OCI-LY7 (cell line): ENCODE measurements at regions of chr6 and their contacts with region 1.

Region 1: DNA sequence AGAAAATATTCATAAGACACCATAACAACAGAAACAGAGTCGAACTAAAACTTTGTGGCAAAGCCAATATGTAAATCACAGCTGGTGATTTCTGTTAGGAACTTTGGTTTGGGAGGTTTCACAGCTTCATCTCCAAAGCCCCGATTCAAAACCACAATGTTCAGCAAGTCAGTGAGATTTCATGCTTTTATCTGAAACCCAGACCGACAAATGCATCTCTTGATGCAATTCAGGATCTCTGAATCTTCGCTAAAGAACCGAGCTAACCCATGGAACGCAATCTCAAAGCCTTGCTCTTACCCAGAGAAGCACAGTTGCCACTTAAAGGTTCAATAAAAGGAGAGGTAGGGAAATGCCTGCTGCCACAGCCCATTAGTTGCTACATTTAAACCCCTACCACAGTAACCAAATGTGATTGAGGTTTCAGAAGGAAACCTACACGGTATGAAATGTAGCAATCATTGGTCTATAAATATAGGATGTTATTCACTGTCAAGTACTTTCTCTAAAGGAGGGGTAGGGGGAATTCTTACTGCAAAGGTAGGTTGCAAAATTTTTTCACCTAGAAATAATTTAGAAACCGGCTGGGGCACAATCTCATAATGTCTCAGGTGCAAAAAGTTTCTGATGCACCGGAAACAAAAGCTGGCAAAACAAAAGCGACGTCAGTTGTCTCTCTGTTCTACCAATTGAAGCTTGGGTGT is 381.0 kb upstream of the ARID1B start:
- DNase-seq: peak; percentile 89
- H3K4me3 ChIP-seq: peak overlapping the region; percentile 70
- H3K27ac ChIP-seq: peak overlapping the region; percentile 99
- H3K4me1 ChIP-seq: peaks cover 82% of the 10 kb centered on the region
- CTCF ChIP-seq: no peak

Region 2: DNA sequence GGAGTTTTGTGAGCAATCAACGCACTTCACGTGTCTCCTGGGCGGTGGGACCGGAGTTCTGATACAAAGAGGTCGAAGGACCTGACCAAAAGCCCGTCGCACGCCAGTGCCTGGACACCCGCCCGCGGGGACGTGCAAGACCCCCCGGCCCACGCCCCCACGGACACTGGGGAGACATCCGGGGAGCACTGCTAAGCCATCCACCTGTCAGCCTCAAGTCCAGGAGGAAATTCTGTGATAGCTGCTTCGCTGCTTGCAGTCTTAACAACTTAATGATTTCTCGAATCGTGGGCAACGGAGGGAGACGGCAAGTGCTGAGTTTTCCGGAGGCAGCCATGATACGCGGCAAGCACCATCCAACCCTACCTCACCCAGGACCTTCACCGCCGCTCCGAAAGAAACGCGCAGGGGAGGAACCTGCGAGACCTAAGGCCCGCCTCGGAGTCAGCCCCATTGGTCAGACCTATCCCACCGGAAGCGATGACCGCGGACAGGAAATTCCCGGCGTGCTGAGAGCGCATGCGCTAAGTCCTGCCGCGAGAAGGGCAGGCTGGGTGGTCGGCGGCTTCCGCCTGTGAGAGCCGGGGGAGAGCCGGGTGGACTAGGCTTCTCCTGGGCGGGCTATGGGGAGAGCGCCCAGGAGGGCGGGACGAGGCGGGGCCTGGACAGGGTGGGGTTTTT is 1082.0 kb before region 1 on chr6 and contains the start of gene TFB1M:
- CTCF ChIA-PET with region 1: no interaction called
- POLR2A ChIA-PET with region 1: interaction called, 5 read pairs
- intact Hi-C with region 1: loop called (anchors 2 kb)
- DNase-seq: peak; percentile 99
- H3K4me3 ChIP-seq: peak within 1 kb of the TSS; percentile 85
- H3K27ac ChIP-seq: peak within 1 kb of the TSS; percentile 89
- H3K4me1 ChIP-seq: peaks cover 28% of the 10 kb centered on the region
- CTCF ChIP-seq: no peak
- total RNA-seq, gene TFB1M: 33.0 and 34.8 TPM in 2 replicates

Region 3: GRCh38 chr6:156279261-156279969 is 116.8 kb before region 1 on chr6:
- CTCF ChIA-PET with region 1: interaction called, 5 read pairs
- POLR2A ChIA-PET with region 1: interaction called, 45 read pairs
- intact Hi-C with region 1: loop called (anchors 1 kb)
- DNase-seq: peak; percentile 98
- H3K4me3 ChIP-seq: peak overlapping the region; percentile 61
- H3K27ac ChIP-seq: peak overlapping the region; percentile 96
- H3K4me1 ChIP-seq: peaks cover 61% of the 10 kb centered on the region
- CTCF ChIP-seq: no peak

Region 4: GRCh38 chr6:156430386-156430785 is 34.2 kb after region 1 on chr6:
- CTCF ChIA-PET with region 1: no interaction called
- POLR2A ChIA-PET with region 1: no interaction called
- intact Hi-C with region 1: no loop called
- DNase-seq: no peak
- H3K4me3 ChIP-seq: no peak overlapping the region
- H3K27ac ChIP-seq: no peak overlapping the region
- H3K4me1 ChIP-seq: no peaks in the 10 kb centered on the region
- CTCF ChIP-seq: no peak

Region 5: DNA sequence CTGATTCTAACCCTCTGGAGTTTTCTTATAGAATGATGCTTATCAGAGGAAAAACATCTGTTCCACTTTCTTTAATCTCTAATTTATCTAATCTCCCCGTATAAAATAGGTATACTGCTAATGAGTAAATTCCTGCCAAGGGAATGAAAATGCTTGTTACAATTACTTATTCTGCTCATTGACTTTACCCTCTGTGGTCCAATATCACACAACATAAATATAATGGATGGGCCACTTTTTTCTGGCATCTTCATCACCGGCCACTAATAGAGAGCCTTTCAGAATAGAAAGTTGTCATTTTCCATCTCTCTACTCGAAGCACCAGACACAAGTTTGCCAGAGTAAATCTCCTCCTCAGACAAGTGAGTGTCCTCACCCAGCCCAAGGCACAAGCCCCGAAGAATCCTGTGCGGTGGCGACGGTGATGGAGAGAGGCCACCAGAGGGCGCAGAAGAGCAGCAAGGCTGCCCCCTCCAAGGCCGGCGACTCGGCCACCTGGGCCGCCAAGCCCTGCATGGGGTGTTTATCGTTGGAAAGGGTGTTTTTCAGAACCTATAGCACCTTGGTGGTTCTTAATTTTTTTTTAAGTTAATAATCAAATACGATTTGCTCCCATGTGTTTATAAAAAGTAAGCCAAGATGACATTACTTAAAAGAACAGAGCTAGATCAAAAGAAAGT is 168.0 kb after region 1 on chr6:
- CTCF ChIA-PET with region 1: no interaction called
- POLR2A ChIA-PET with region 1: interaction called, 8 read pairs
- intact Hi-C with region 1: loop called (anchors 2 kb)
- DNase-seq: peak; percentile 89
- H3K4me3 ChIP-seq: peak overlapping the region; percentile 25
- H3K27ac ChIP-seq: peak overlapping the region; percentile 57
- H3K4me1 ChIP-seq: peaks cover 23% of the 10 kb centered on the region
- CTCF ChIP-seq: peak; percentile 100

Region 6: GRCh38 chr6:156686995-156687788 is 291.0 kb after region 1 on chr6:
- CTCF ChIA-PET with region 1: no interaction called
- POLR2A ChIA-PET with region 1: interaction called, 5 read pairs
- intact Hi-C with region 1: loop called (anchors 1 kb)
- DNase-seq: peak; percentile 89
- H3K4me3 ChIP-seq: peak overlapping the region; percentile 73
- H3K27ac ChIP-seq: peak overlapping the region; percentile 92
- H3K4me1 ChIP-seq: peaks cover 57% of the 10 kb centered on the region
- CTCF ChIP-seq: no peak

Region 7: GRCh38 chr6:156752666-156753301 is 356.6 kb after region 1 on chr6:
- CTCF ChIA-PET with region 1: no interaction called
- POLR2A ChIA-PET with region 1: interaction called, 4 read pairs
- intact Hi-C with region 1: loop called (anchors 2 kb)
- DNase-seq: peak; percentile 78
- H3K4me3 ChIP-seq: peak overlapping the region; percentile 43
- H3K27ac ChIP-seq: peak overlapping the region; percentile 77
- H3K4me1 ChIP-seq: peaks cover 68% of the 10 kb centered on the region
- CTCF ChIP-seq: peak; percentile 82

Region 8: DNA sequence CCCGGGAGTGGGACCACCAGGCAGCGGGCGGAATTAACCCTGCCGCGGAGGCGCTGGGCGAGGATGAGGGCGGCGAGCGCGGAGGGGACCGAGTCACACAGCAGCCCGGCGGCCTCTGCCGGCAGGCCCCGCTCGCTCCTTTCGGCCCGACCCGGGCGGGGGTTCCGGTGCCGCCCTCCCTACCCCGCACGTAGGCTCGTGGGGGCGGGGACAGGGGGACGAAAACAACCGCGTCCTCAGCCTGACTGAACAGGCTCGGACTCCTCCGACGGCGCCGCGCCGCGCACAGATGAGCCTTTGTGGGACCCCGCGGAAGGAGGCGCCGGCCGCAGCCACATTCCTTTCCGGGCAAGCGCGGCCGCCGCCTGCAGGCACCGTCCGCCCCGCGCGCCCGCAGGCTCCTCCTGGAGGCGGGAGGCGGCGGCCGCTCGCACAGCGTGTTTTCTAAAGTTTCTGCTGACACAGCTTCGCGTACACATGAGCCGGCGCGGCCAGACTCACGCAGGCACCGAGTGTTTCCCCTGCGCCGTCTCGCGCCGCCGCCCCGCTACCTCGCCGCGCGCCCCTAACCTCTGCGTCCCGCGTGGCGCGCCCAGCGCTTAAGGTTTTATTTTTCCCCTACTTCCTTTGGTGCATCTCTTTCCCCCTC is 625.2 kb after region 1 on chr6:
- CTCF ChIA-PET with region 1: no interaction called
- POLR2A ChIA-PET with region 1: no interaction called
- intact Hi-C with region 1: loop called (anchors 2 kb)
- DNase-seq: peak; percentile 93
- H3K4me3 ChIP-seq: peak overlapping the region; percentile 73
- H3K27ac ChIP-seq: peak overlapping the region; percentile 89
- H3K4me1 ChIP-seq: peaks cover 38% of the 10 kb centered on the region
- CTCF ChIP-seq: peak; percentile 38